ENCODE measurements at regions of chr11 and their contacts with region 1.

Region 1: GRCh38 chr11:76975513-76975912 is 58.7 kb upstream of the B3GNT6 start:
- DNase-seq: no peak
- H3K4me3 ChIP-seq: no peak overlapping the region
- H3K27ac ChIP-seq: no peak overlapping the region
- H3K4me1 ChIP-seq: no peaks in the 10 kb centered on the region
- H3K27me3 ChIP-seq: no peaks in the 10 kb centered on the region
- CTCF ChIP-seq: no peak

Region 2: DNA sequence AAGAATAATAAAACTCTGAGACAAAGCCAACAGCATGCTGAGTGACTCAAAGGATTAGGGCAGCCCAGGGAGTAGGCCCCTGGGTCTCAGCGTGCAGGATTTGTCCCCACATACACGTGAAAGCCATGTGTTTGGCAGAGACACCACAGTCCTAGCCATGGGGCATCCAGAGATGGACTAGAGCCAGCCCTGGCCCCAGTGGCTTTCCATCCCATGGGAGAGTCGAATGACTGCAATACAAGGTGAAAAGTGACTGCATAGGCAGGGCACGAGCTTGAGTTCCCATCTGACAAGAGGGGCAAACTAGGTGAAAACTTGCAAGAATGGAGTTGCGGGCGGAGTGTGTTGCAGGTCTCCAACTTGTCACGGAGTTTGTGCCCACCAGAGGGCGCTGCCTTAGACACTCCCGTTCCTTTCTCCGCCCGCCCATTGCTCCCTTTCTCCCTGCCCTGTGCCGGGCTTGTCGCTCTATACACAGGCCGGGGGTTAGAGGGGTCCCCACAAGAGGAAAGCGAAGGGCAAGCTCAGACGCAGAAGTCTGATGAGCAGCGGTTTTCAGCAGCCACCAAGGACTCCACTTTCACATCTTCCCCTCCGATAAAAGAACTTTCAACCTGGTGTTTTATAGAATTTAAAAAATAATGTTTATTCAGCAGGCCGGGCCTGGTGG is 168.2 kb before region 1 on chr11:
- CTCF ChIA-PET with region 1: interaction called, 10 read pairs
- POLR2A ChIA-PET with region 1: no interaction called
- intact Hi-C with region 1: no loop called
- DNase-seq: peak; percentile 95
- H3K4me3 ChIP-seq: no peak overlapping the region
- H3K27ac ChIP-seq: peak overlapping the region; percentile 66
- H3K4me1 ChIP-seq: peaks cover 12% of the 10 kb centered on the region
- H3K27me3 ChIP-seq: no peaks in the 10 kb centered on the region
- CTCF ChIP-seq: peak; percentile 89